ENCODE measurements at regions of chr1 and their contacts with region 1.

Region 1: DNA sequence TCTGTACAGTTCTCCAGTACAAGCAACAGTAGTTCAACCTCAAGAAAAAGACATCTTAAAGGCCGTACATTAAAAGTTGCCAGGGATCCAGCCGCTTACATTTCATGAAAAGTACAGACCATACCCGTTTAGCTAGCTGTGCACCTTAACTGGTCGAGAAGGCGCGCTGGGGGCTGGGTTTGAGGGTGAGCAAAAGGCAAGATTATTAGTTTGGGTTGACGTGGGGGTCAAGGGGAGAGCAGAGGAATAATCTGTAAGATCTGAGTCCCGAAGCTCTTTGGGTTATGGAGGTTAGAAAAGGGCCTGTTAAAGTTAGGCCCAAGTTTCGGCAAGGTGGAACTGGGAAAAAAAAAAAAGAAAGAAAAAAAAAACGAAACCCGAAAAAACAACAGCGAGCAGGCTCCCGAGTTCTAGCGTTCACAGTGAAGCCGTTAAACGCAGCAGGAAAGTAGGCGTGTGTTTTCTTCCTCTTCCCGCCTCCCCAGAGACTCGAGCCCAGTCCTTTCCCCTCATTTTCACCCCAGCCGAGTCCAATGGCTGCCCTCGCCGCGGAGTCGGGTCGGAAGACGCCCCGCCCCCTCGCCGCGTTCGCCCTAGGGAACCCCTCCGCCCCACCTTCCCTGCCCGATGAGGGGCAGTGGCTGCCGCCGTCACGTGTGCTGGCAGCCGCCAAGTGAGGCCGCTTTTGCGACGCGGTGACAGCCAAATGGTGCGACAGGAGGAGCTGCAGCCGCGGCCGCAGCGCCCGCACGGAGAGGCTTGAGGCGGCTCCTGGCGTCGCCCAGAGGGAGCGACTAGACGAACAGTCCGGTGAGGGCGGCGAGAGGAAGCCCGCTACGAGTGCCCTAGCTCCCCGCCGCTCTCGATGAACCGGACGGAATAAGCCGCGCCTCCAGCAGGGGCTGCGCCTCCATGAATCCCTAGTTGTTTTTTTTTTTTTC is at the start of gene PKN2:
- DNase-seq: peak; percentile 98
- H3K4me3 Mint-ChIP-seq: peak within 1 kb of the TSS; percentile 88
- H3K27ac Mint-ChIP-seq: peak within 1 kb of the TSS; percentile 86
- H3K4me1 Mint-ChIP-seq: no peaks in the 10 kb centered on the region
- H3K27me3 Mint-ChIP-seq: no peaks in the 10 kb centered on the region
- CTCF ChIP-seq: no peak
- total RNA-seq, gene PKN2: 75.6 and 82.8 TPM in 2 replicates

Region 2: DNA sequence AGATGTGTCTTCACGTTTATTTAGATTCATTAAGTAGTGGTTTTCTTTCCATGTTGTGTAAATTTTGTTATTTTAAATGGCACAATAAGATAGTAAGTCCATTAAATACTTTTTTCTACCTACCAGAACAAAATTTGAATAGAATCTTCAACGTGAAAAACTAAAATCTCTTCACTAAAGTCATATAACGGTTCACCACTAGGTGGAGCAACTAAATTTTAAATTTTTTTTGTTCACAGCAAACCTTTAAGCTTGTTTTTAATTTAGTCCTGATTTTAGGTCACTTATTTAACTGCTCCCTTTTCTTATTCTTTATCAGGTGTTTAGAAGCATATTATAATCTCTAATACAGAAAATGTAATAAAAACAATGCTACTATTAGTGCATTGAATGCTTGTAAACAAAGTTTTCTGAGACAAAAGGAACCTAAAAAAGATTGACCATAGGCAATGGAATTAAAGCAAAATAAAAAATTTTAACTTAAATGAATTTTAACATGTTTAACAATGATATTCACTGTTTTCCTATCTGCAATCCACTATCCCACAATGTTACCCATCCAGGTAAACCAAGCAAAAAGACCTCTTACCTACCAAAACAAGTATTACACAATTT is 28.0 kb before region 1 on chr1:
- CTCF ChIA-PET with region 1: interaction called, 11 read pairs
- intact Hi-C with region 1: loop called (anchors 2 kb)
- DNase-seq: no peak
- H3K4me3 Mint-ChIP-seq: no peak overlapping the region
- H3K27ac Mint-ChIP-seq: no peak overlapping the region
- H3K4me1 Mint-ChIP-seq: peaks cover 8% of the 10 kb centered on the region
- H3K27me3 Mint-ChIP-seq: no peaks in the 10 kb centered on the region
- CTCF ChIP-seq: no peak

Region 3: DNA sequence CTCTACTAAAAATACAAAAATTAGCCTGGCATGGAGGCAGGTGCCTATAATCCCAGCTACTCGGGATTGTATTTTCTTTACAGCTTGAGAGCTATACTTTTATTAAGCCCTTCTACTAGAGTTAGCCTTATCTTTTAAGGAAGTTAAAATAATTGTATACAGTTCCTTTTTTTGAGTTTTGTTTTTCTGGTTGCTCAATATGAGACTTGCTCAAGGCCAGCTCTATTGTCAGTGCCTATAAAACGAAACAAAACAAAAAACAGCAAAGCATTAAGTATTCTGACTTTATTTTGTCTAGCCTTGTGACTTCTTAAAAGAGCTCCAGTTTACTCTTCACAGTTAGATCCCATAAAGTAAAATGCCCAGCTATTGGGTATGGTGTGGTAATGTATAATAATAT is 17.5 kb after region 1 on chr1:
- CTCF ChIA-PET with region 1: interaction called, 17 read pairs
- intact Hi-C with region 1: loop called (anchors 2 kb)
- DNase-seq: no peak
- H3K4me3 Mint-ChIP-seq: no peak overlapping the region
- H3K27ac Mint-ChIP-seq: no peak overlapping the region
- H3K4me1 Mint-ChIP-seq: peaks cover 41% of the 10 kb centered on the region
- H3K27me3 Mint-ChIP-seq: no peaks in the 10 kb centered on the region
- CTCF ChIP-seq: no peak

Region 4: DNA sequence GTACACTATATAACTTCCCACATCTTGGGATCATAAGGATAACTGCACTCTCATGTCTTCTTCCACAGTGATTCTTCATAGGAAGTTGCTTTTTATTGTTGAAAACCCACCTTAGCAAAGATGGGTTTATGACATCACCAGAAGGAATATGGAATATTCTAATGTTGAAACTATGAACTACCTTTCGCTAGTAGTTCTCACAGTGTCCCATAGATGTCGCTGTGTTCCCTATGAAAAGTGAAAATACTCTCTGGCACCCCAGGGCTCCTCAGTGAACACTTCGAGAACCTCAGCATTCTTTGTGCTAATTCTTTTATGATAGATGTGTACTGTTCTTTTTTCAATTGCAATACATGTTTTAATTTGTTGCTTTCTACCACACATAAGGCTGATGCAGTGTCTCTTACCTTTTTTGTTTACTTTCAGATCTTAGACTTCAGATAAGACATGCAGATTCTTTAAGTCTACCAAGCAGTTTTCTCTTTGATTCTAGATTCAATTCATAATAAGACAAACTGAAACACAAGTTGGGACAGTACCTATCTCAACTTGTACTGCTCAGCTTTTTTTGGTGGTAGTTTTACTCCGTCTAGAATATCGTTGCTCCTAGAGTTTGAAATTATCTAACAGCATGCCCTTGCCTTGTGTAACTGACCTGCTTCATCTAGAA is 116.7 kb after region 1 on chr1:
- CTCF ChIA-PET with region 1: no interaction called
- intact Hi-C with region 1: no loop called
- DNase-seq: peak; percentile 44
- H3K4me3 Mint-ChIP-seq: no peak overlapping the region
- H3K27ac Mint-ChIP-seq: no peak overlapping the region
- H3K4me1 Mint-ChIP-seq: peaks cover 35% of the 10 kb centered on the region
- H3K27me3 Mint-ChIP-seq: no peaks in the 10 kb centered on the region
- CTCF ChIP-seq: peak; percentile 60

Region 5: DNA sequence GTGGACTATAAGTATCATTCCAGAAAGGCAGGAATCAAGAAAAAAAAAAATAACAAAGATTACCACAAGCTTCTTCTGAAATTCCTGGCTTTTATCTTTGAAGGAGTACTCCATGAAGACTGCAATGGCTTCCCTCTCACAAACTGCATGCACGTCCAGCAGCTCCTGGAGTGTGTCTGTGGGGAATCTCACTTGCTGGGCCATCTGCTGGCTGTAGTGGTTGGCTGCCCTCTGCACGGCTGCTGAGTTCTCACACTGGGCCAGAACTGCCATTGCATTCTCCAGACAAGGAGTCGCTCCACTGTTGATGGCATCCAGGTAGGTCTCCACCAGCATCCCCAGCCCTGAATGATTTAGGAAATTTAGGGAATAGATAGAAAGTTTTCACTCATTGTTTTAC is 465.4 kb after region 1 on chr1:
- CTCF ChIA-PET with region 1: no interaction called
- intact Hi-C with region 1: no loop called
- DNase-seq: peak; percentile 51
- H3K4me3 Mint-ChIP-seq: no peak overlapping the region
- H3K27ac Mint-ChIP-seq: no peak overlapping the region
- H3K4me1 Mint-ChIP-seq: no peaks in the 10 kb centered on the region
- H3K27me3 Mint-ChIP-seq: no peaks in the 10 kb centered on the region
- CTCF ChIP-seq: no peak